Endothelial cell of umbilical vein (primary cell): ENCODE measurements at regions of chr3 and their contacts with region 1.

Region 1: DNA sequence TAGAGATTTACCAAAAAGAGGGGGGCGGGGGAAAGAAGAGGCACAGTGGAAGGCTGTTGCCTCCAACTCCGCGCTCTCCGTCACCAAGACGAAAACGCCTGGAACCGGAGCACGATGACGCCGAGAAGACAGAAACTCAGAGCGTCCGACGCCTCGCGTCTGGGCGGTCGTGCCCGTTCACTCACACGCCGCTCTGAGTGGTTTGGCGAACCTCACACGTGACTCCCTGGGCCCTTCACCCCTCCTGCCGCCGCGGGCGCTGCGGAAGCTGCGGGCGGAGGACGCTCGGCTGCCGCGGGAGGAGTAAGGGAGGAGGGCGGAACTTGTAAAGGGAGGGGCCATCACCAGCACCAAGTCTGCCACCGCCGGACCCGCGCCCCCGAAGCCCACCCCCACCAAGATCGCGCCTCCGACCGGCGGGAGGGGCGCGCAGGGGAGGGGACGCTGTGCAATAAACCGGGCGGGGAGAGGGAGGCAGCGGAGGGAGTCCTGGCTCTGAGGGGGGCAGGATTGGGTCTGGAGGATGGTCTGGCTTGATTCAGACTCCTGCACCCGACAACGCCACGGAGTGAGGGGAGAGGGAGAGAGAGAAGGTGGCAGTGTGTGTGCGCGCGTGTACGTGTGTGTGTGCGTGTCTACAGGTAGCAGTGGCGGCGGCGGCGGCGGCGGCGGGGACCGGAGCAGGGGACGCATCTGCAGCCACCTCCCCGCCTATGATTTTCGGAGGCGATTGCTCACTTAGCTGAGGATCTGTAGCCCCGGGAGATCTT is 1.9 kb upstream of the NLGN1 start:
- DNase-seq: peak; percentile 92
- H3K4me3 ChIP-seq: peak overlapping the region; percentile 80 to 100 (median 96)
- H3K27ac ChIP-seq: peak overlapping the region; percentile 97
- H3K4me1 ChIP-seq: peaks cover 26% of the 10 kb centered on the region
- H3K27me3 ChIP-seq: no peaks in the 10 kb centered on the region
- CTCF ChIP-seq: no peak
- POLR2A ChIP-seq: peak; percentile 79

Region 2: GRCh38 chr3:172918165-172918564 is 477.4 kb before region 1 on chr3:
- CTCF ChIA-PET with region 1: no interaction called
- POLR2A ChIA-PET with region 1: no interaction called
- dilution Hi-C with region 1: no loop called
- intact Hi-C with region 1: loop called (anchors 5 kb)
- DNase-seq: peak; percentile 96
- H3K4me3 ChIP-seq: no peak overlapping the region
- H3K27ac ChIP-seq: peak overlapping the region; percentile 83
- H3K4me1 ChIP-seq: peaks cover 49% of the 10 kb centered on the region
- H3K27me3 ChIP-seq: no peaks in the 10 kb centered on the region
- CTCF ChIP-seq: no peak
- POLR2A ChIP-seq: peak; percentile 49

Region 3: GRCh38 chr3:173214576-173214975 is 181.0 kb before region 1 on chr3:
- CTCF ChIA-PET with region 1: no interaction called
- POLR2A ChIA-PET with region 1: no interaction called
- dilution Hi-C with region 1: no loop called
- intact Hi-C with region 1: no loop called
- DNase-seq: no peak
- H3K4me3 ChIP-seq: no peak overlapping the region
- H3K27ac ChIP-seq: no peak overlapping the region
- H3K4me1 ChIP-seq: no peaks in the 10 kb centered on the region
- H3K27me3 ChIP-seq: peaks cover 4 to 5% of the 10 kb centered on the region in 2 experiments
- CTCF ChIP-seq: no peak
- POLR2A ChIP-seq: no peak

Region 4: GRCh38 chr3:173354124-173354523 is 41.5 kb before region 1 on chr3:
- CTCF ChIA-PET with region 1: no interaction called
- POLR2A ChIA-PET with region 1: no interaction called
- dilution Hi-C with region 1: no loop called
- intact Hi-C with region 1: no loop called
- DNase-seq: no peak
- H3K4me3 ChIP-seq: no peak overlapping the region
- H3K27ac ChIP-seq: no peak overlapping the region
- H3K4me1 ChIP-seq: no peaks in the 10 kb centered on the region
- H3K27me3 ChIP-seq: no peaks in the 10 kb centered on the region
- CTCF ChIP-seq: no peak
- POLR2A ChIP-seq: no peak

Region 5: DNA sequence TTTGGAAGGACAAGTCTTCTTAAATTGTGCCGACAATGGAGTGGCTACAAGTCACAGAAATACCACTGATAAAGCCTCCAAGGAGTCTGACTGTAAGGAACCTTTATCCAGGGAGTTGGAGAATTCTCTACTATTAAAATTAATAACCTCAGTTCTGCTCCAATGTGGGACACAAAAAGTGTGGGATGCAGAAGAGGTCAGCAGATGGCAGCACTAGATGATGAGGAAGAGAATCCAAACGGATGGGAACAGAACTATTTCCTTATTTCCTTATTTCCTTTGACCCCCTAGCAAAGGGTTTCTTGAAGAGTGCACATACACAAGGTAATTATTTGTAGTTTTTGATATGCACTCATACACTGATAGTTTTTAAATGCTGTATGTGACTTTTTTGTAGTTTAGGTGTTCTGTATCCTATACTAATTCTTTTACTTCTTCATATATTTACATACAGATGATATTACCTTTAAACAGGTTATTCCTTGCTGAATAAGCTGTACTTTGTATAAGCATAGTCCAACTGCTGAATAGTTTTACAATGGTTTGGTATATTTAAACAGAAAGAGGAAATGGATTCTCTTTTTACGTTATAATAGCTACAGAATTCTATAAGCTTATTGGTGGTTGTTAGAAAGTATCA is 23.6 kb before region 1 on chr3:
- CTCF ChIA-PET with region 1: interaction called, 7 read pairs
- POLR2A ChIA-PET with region 1: interaction called, 3 read pairs
- dilution Hi-C with region 1: no loop called
- intact Hi-C with region 1: loop called (anchors 1 kb)
- DNase-seq: peak; percentile 50
- H3K4me3 ChIP-seq: no peak overlapping the region
- H3K27ac ChIP-seq: no peak overlapping the region
- H3K4me1 ChIP-seq: no peaks in the 10 kb centered on the region
- H3K27me3 ChIP-seq: no peaks in the 10 kb centered on the region
- CTCF ChIP-seq: peak; percentile 56 to 57
- POLR2A ChIP-seq: no peak

Region 6: DNA sequence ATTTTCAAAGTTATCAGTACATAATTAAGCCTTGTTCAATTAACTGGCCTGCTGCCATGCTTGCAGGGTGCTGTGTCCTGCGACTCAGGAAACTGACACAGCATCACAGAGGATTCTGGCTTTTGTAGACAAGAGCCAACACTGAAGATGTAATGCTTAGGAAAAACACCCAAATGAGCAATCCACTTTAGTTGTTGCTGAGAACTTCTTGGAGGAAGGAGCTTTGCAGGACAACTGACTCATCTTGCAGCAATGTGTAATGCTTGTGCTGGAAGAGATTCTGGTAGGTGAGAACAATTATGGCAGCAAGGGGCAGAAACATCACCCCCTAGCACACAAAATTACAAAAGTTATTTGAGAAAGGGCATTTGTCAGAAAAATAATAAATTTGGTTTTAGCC is 69.5 kb after region 1 on chr3:
- CTCF ChIA-PET with region 1: no interaction called
- POLR2A ChIA-PET with region 1: no interaction called
- dilution Hi-C with region 1: no loop called
- intact Hi-C with region 1: loop called (anchors 2 kb)
- DNase-seq: peak; percentile 79
- H3K4me3 ChIP-seq: peak overlapping the region in 1 of 3 experiments; percentile 32
- H3K27ac ChIP-seq: peak overlapping the region; percentile 56
- H3K4me1 ChIP-seq: peaks cover 27% of the 10 kb centered on the region
- H3K27me3 ChIP-seq: no peaks in the 10 kb centered on the region
- CTCF ChIP-seq: no peak
- POLR2A ChIP-seq: no peak

Region 7: DNA sequence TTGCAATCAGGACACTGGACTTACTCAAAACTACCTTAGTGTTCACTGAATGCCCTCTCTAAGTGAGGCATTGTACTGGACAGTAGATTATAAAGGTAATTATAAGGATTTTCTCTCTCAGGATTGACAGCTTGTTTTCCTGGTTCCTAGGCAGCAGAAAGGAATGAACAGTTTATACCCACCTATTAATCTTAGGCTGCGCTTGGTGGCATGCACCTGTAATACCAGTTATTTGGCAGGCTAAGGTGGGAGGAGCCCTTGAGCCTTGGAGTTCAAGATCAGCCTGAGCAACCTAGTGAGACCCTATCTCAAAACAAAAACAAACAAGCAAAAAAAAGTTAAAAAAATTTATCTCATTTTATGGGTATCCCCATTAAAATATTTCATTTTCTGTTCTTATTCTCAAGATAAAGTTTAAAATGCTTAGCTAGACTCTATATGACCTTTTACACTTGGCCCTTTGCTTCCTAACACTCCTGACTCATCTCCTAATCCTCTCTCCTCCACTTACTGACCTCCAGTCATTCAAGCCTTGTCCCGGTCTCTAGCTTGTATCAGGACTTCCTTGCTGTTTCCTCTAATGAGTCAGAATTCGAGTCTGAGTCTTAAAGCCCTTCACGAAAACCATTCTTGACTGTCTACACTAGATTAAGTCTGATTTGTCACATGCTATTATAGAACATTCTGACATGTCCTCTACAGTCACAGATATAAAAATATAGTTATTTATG is 350.5 kb after region 1 on chr3:
- CTCF ChIA-PET with region 1: no interaction called
- POLR2A ChIA-PET with region 1: interaction called, 3 read pairs
- dilution Hi-C with region 1: no loop called
- intact Hi-C with region 1: loop called (anchors 1 kb)
- DNase-seq: peak; percentile 93
- H3K4me3 ChIP-seq: no peak overlapping the region
- H3K27ac ChIP-seq: peak overlapping the region; percentile 96
- H3K4me1 ChIP-seq: peaks cover 97% of the 10 kb centered on the region
- H3K27me3 ChIP-seq: no peaks in the 10 kb centered on the region
- CTCF ChIP-seq: no peak
- POLR2A ChIP-seq: no peak

Region 8: DNA sequence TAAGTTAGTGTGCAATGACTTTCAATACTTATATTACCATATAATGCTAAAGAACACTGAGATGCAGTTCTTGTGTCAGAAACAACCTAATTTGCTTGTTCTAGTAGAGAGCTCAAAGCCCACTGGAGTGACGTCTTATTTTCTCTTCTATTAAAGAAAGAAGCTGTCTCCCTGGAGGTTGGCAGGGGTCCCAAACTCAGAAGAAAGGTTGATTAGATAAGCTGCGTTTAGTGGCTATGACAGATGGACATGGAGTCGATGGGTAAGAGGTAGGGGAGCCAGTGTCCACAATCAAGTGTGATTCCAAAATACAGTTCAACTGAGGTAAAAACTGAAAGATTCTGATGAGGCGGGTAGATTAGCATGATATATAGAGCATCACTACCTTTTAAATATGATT is 365.6 kb after region 1 on chr3:
- CTCF ChIA-PET with region 1: no interaction called
- POLR2A ChIA-PET with region 1: no interaction called
- dilution Hi-C with region 1: no loop called
- intact Hi-C with region 1: no loop called
- DNase-seq: peak; percentile 62
- H3K4me3 ChIP-seq: no peak overlapping the region
- H3K27ac ChIP-seq: no peak overlapping the region
- H3K4me1 ChIP-seq: peaks cover 3% of the 10 kb centered on the region
- H3K27me3 ChIP-seq: no peaks in the 10 kb centered on the region
- CTCF ChIP-seq: no peak
- POLR2A ChIP-seq: no peak

Region 9: DNA sequence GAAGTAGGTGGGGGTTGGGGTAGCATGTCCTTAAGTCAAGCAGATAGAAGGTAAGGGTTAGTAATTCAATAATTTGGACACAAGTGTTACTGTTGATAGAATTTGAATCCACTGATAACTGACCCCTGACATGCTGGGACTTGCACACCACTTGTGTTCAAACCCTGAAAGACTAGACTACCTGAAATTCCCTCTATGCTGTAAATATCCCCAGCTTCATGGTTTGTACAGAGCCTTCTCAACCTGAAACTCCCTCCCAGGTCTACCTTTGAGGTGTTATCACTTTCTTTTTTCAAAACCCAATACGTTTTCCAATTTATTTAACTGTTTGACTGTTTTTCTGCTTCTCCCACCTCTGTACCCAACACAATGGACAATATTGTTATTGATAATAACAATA is 461.6 kb after region 1 on chr3:
- CTCF ChIA-PET with region 1: no interaction called
- POLR2A ChIA-PET with region 1: no interaction called
- dilution Hi-C with region 1: no loop called
- intact Hi-C with region 1: no loop called
- DNase-seq: no peak
- H3K4me3 ChIP-seq: no peak overlapping the region
- H3K27ac ChIP-seq: no peak overlapping the region
- H3K4me1 ChIP-seq: no peaks in the 10 kb centered on the region
- H3K27me3 ChIP-seq: no peaks in the 10 kb centered on the region
- CTCF ChIP-seq: no peak
- POLR2A ChIP-seq: no peak

Region 10: DNA sequence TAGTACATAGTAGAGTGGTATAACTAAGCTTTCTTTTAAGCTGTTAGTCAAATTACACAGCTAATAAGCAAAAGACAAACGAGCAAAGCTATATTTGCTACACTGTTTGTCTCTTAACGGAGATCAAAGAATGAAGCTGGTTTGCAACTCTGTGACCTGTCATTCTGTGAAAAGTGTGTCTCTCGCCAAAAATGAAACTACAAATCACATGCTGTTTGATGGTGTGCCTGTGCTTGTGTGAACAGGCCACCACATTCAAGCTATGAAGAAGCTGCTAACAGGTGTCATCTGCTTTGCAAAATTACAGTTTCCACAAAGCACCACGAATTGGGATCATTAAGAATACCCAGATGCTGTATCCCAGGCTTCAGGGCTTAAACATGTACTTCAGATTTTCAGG is 795.8 kb after region 1 on chr3:
- CTCF ChIA-PET with region 1: no interaction called
- POLR2A ChIA-PET with region 1: no interaction called
- dilution Hi-C with region 1: no loop called
- intact Hi-C with region 1: loop called (anchors 5 kb)
- DNase-seq: peak; percentile 28
- H3K4me3 ChIP-seq: no peak overlapping the region
- H3K27ac ChIP-seq: no peak overlapping the region
- H3K4me1 ChIP-seq: peaks cover 21% of the 10 kb centered on the region
- H3K27me3 ChIP-seq: no peaks in the 10 kb centered on the region
- CTCF ChIP-seq: no peak
- POLR2A ChIP-seq: no peak